IMR-90 (cell line): ENCODE measurements at regions of chrX and their contacts with region 1.

Region 1: DNA sequence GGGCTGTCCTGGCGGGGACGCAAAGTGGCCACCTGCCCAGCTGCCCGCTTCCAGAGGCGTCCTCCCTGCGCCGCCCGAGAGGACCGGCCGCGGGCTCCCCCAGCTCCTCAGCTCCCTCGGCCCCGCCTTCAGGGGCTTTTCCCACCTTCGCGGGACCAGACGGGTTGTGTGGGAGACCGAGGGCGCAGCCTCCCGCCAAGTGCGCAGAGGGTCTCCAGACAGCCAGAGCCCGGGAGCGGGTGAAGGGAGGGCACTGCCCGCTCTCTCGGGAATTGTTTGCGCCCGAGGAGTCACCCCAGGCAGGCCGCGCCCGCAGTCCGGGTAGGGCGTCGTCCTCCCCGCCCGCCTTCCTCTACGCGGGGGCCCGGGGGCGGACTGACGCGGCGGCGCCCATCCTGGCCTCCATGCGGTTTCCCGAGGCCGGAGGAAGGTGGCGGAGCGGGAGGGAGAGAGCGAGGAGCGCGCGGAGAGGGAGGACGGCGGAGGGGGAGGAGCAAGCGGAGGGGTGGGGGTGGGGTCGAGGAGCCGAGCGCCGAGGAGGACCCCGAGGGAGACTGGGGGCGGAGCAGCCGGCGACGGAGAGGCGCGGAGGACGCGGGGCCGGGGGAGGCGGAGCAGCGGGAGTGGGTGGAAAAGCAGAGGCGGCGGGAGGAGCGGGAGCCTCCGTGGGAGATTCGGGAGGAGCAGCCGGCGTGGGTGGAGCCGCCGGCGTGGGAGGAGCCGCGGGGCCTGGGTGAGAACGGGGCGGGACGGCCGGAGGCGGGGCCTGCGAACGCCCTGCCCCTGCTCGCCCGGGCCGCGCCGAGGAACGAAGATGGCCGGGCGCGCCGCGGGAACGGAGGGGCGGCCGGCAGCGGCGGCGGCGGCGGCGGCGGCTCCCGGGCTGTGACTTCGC is 47.6 kb downstream of the CLDN34 start:
- DNase-seq: peak; percentile 84
- ATAC-seq: peak; percentile 88
- H3K4me3 ChIP-seq: peak overlapping the region; percentile 74
- H3K27ac ChIP-seq: peak overlapping the region; percentile 74
- H3K4me1 ChIP-seq: peaks cover 8% of the 10 kb centered on the region
- H3K27me3 ChIP-seq: no peaks in the 10 kb centered on the region
- CTCF ChIP-seq: no peak
- POLR2A ChIP-seq: no peak; the same call in 1 of the 2 replicates
- RAD21 ChIP-seq: no peak

Region 2: GRCh38 chrX:10077425-10078188 is 62.9 kb after region 1 on chrX:
- CTCF ChIA-PET with region 1: no interaction called
- POLR2A ChIA-PET with region 1: interaction called, 11 read pairs
- dilution Hi-C with region 1: no loop called
- in situ Hi-C with region 1: no loop called
- intact Hi-C with region 1: loop called (anchors 2 kb)
- DNase-seq: peak; percentile 83
- ATAC-seq: peak; percentile 91
- H3K4me3 ChIP-seq: no peak overlapping the region
- H3K27ac ChIP-seq: peak overlapping the region; percentile 39; the same call in 1 of the 2 replicates
- H3K4me1 ChIP-seq: peaks cover 4% of the 10 kb centered on the region
- H3K27me3 ChIP-seq: no peaks in the 10 kb centered on the region
- CTCF ChIP-seq: no peak
- POLR2A ChIP-seq: no peak
- RAD21 ChIP-seq: no peak

Region 3: GRCh38 chrX:10083809-10084208 is 69.1 kb after region 1 on chrX:
- CTCF ChIA-PET with region 1: no interaction called
- POLR2A ChIA-PET with region 1: interaction called, 11 read pairs
- dilution Hi-C with region 1: no loop called
- in situ Hi-C with region 1: no loop called
- intact Hi-C with region 1: loop called (anchors 2 kb)
- DNase-seq: no peak
- ATAC-seq: no peak
- H3K4me3 ChIP-seq: no peak overlapping the region
- H3K27ac ChIP-seq: no peak overlapping the region
- H3K4me1 ChIP-seq: peaks cover 2% of the 10 kb centered on the region; the same call in 1 of the 2 replicates
- H3K27me3 ChIP-seq: no peaks in the 10 kb centered on the region
- CTCF ChIP-seq: no peak
- POLR2A ChIP-seq: no peak
- RAD21 ChIP-seq: no peak

Region 4: DNA sequence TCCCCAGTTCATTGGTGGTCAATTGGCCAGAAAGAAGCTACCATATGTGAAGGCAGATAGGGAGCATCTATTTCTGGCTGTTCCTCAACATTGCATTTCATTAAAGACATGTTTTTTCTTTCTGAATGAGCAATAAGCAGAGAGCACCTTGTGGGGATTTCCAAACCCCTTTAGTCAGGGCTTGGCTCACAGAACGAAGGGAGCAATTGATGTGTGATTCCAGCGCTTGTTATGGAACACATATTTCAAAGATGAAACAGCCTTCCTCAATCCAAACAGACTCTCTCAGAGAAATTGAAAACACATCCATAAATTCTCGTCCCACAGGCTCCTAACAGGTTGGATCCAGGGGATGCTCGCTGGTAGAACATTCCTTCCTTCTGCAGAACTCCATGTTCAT is 226.2 kb after region 1 on chrX:
- CTCF ChIA-PET with region 1: no interaction called
- POLR2A ChIA-PET with region 1: no interaction called
- dilution Hi-C with region 1: no loop called
- in situ Hi-C with region 1: no loop called
- intact Hi-C with region 1: no loop called
- DNase-seq: peak; percentile 94
- ATAC-seq: peak; percentile 65
- H3K4me3 ChIP-seq: no peak overlapping the region
- H3K27ac ChIP-seq: peak overlapping the region; percentile 73
- H3K4me1 ChIP-seq: peaks cover 10% of the 10 kb centered on the region
- H3K27me3 ChIP-seq: no peaks in the 10 kb centered on the region
- CTCF ChIP-seq: no peak
- POLR2A ChIP-seq: no peak
- RAD21 ChIP-seq: no peak